ENCODE measurements at regions of chr4 and their contacts with region 1.

Region 1: GRCh38 chr4:146124023-146124662 is 51.4 kb upstream of the LSM6 start:
- DNase-seq: no peak
- H3K4me3 ChIP-seq: no peak overlapping the region
- H3K27ac ChIP-seq: no peak overlapping the region
- H3K4me1 ChIP-seq: peaks cover 9% of the 10 kb centered on the region
- CTCF ChIP-seq: 0 out of 2 replicates have a peak, but pooled peaks have one; percentile 28

Region 2: DNA sequence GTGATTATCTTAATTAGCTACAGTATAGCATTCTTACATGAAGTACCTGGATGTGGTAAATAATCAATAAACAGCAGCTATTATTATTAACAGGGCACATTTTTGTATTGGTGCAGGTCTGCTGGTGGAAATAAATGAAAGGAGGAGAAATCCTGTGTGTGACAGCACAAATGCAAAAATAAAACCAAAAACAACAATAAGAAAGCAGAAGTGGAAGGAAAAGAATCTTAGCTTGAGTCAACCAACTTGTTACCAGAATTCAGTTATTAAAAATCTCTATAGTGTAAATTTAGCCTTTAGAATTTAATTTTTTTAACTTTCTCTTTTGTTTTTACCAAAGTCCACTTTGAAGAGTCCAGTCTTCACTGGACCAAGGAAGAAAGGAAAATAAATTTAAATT is 11.8 kb before region 1 on chr4:
- CTCF ChIA-PET with region 1: no interaction called
- POLR2A ChIA-PET with region 1: interaction called, 13 read pairs
- intact Hi-C with region 1: no loop called
- DNase-seq: no peak
- H3K4me3 ChIP-seq: no peak overlapping the region
- H3K27ac ChIP-seq: no peak overlapping the region
- H3K4me1 ChIP-seq: peaks cover 18% of the 10 kb centered on the region
- CTCF ChIP-seq: no peak